Heart right ventricle (tissue), 16 donors: ENCODE measurements at regions of chr6 and their contacts with region 1.

Region 1: GRCh38 chr6:152982768-152983636 is at the start of gene FBXO5:
- DNase-seq: peak; percentile 97 to 98
- ATAC-seq: peak; percentile 96 to 99 (median 97)
- H3K4me3 ChIP-seq: peak within 1 kb of the TSS; percentile 52 to 98 (median 70)
- H3K27ac ChIP-seq: peak within 1 kb of the TSS; percentile 82 to 97 (median 92)
- H3K4me1 ChIP-seq: peaks cover 15 to 50% (median 27%) of the 10 kb centered on the region in 9 donors
- H3K27me3 ChIP-seq: no peaks in the 10 kb centered on the region
- CTCF ChIP-seq: no peak
- total RNA-seq, gene FBXO5: 0.87 to 4.2 (median 1.6) TPM

Region 2: DNA sequence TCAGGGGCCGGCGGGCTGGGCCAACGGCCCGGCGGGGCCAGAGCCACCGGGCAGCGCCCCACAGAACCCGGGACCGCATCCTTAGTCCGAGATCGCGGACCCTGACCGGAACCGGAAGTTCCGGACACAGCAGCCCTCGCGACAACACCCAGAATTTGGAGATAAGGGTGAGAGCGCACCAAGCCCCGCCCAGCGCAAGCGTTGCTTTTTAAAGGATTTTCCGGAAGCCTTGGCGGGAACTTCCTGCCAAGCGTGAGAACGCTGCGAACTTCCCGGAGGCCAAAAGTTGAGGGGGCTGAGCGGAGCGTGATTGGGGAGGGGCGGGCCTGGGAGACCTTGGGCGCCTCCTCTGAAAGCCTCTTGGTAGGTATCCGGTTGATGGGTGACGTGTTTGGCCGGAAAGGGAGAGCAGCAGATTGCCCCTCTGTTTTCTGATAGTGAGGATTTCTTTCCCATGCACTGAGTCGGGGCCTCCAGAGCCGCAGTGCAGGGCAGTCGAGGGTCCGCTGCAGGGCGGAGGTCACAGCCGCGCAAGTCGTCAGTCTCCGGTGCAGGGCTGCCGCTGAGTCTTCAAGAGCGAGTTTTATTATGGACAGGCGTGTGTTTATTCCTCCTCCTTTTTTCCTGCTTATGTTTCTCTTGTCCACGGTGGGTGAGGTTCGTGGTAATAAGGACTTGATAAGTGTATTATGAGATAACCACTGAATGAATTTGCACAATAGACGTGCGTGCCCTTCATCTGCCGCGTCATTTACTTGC is 19.8 kb after region 1 on chr6 and contains the start of gene MTRF1L:
- intact Hi-C with region 1: loop called in 3 of 10 experiments (anchors 1 to 2 kb)
- DNase-seq: peak; percentile 91 to 95
- ATAC-seq: peak; percentile 97 to 99 (median 99)
- H3K4me3 ChIP-seq: peak within 1 kb of the TSS; percentile 67 to 85 (median 74)
- H3K27ac ChIP-seq: peak within 1 kb of the TSS; percentile 73 to 97 (median 92)
- H3K4me1 ChIP-seq: peaks cover 9 to 50% (median 40%) of the 10 kb centered on the region in 9 donors
- H3K27me3 ChIP-seq: no peaks in the 10 kb centered on the region
- CTCF ChIP-seq: peak in 1 of 9 donors; percentile 18
- total RNA-seq, gene MTRF1L: 23.3 to 44.4 (median 26.4) TPM